Tibial artery (tissue), 4 donors: ENCODE measurements at regions of chr15 and their contacts with region 1.

Region 1: GRCh38 chr15:77821188-77821958 is 188.7 kb upstream of the LINGO1 start:
- DNase-seq: no peak
- H3K4me3 ChIP-seq: no peak overlapping the region
- H3K27ac ChIP-seq: no peak overlapping the region
- H3K4me1 ChIP-seq: peaks cover 0 to 27% (median 21%) of the 10 kb centered on the region in 4 donors
- H3K27me3 ChIP-seq: peaks cover 0 to 76% of the 10 kb centered on the region in 2 donors
- CTCF ChIP-seq: peak; percentile 48 to 49

Region 2: GRCh38 chr15:77633134-77633912 is 188.1 kb before region 1 on chr15:
- intact Hi-C with region 1: loop called (anchors 5 kb)
- DNase-seq: peak; percentile 82 to 90
- H3K4me3 ChIP-seq: peak overlapping the region; percentile 48 to 59
- H3K27ac ChIP-seq: peak overlapping the region in 1 of 2 donors; percentile 17
- H3K4me1 ChIP-seq: peaks cover 0 to 38% (median 27%) of the 10 kb centered on the region in 4 donors
- H3K27me3 ChIP-seq: peaks cover 0 to 73% of the 10 kb centered on the region in 2 donors
- CTCF ChIP-seq: peak; percentile 99 to 100